ENCODE measurements at regions of chr18 and their contacts with region 1.

Region 1: GRCh38 chr18:2780750-2781149 is 66.1 kb upstream of the EMILIN2 start:
- DNase-seq: no peak
- ATAC-seq: no peak
- H3K4me3 ChIP-seq: no peak overlapping the region
- H3K4me3 Mint-ChIP-seq: no peak overlapping the region
- H3K27ac ChIP-seq: no peak overlapping the region
- H3K27ac Mint-ChIP-seq: peak overlapping the region in 1 of 2 donors; percentile 47
- H3K4me1 ChIP-seq: no peaks in the 10 kb centered on the region
- H3K4me1 Mint-ChIP-seq: peaks cover 7 to 8% (median 7%) of the 10 kb centered on the region in 3 donors
- H3K27me3 ChIP-seq: no peaks in the 10 kb centered on the region
- H3K27me3 Mint-ChIP-seq: no peaks in the 10 kb centered on the region

Region 2: DNA sequence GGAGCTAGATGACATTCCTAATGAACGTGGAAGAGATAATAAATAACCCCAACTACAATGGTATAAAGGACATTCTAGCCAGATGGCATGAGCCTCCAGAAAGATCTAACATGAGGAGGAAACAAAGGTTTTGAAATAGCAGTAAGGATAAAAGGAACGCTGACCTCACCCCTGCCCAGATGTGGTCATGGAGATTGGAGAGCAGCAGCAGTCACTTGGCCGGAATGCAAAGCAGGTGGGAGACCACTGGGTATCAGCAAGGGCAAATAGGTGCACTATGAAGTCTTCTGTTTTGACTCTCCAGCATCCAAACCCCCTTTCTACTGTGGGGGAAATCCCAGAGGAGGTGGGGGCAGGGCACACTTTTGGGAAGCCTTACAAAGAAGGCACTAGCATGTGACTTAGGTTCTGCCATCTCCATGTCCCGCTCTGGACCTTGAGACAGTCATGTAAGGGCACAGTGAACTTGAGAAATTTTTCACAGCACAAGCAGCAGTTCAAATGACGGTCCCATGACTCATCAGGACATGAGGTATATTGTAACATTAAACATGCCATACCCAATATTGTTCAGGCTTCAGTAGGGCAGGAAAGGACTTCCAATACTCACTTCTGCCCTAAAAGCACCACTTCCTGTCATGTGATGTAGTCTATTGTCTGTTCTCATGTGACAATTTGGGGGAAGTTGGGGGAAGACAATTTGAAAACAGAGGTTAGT is 264.7 kb before region 1 on chr18:
- CTCF ChIA-PET with region 1: no interaction called
- POLR2A ChIA-PET with region 1: no interaction called
- DNase-seq: peak in 3 of 35 experiments; percentile 3 to 23 (median 8)
- ATAC-seq: peak; percentile 64 to 94 (median 74)
- H3K4me3 ChIP-seq: no peak overlapping the region
- H3K4me3 Mint-ChIP-seq: peak overlapping the region in 1 of 3 donors; percentile 1
- H3K27ac ChIP-seq: no peak overlapping the region
- H3K27ac Mint-ChIP-seq: peak overlapping the region in 1 of 2 donors; percentile 58
- H3K4me1 ChIP-seq: peaks cover 5 to 10% of the 10 kb centered on the region in 2 experiments
- H3K4me1 Mint-ChIP-seq: peaks cover 20 to 22% (median 20%) of the 10 kb centered on the region in 3 donors
- H3K27me3 ChIP-seq: no peaks in the 10 kb centered on the region
- H3K27me3 Mint-ChIP-seq: no peaks in the 10 kb centered on the region

Region 3: DNA sequence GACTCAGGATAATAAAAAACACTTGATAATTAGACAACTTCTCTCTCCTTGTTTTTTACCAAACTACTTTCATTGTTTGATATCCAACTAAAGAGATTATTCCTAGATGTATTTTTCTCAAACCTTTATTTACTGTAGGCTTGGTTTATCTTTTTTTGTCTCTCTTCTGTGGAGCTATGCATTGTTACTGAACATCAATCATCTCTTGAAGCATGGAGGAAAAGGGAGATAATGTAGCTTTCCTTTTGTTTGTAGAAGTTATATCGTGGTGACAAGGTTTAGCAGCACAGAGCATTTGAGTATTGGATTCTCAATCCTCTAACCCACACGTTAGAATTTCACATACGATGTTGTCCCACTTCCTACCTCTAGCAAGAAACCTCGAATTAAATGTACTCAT is 83.6 kb before region 1 on chr18:
- CTCF ChIA-PET with region 1: no interaction called
- POLR2A ChIA-PET with region 1: interaction called, 3 to 10 read pairs
- DNase-seq: no peak
- ATAC-seq: no peak
- H3K4me3 ChIP-seq: no peak overlapping the region
- H3K4me3 Mint-ChIP-seq: no peak overlapping the region
- H3K27ac ChIP-seq: no peak overlapping the region
- H3K27ac Mint-ChIP-seq: peak overlapping the region; percentile 40 to 61
- H3K4me1 ChIP-seq: no peaks in the 10 kb centered on the region
- H3K4me1 Mint-ChIP-seq: peaks cover 16 to 41% (median 32%) of the 10 kb centered on the region in 3 donors
- H3K27me3 ChIP-seq: no peaks in the 10 kb centered on the region
- H3K27me3 Mint-ChIP-seq: no peaks in the 10 kb centered on the region